ENCODE measurements at regions of chr20 and their contacts with region 1.

Region 1: DNA sequence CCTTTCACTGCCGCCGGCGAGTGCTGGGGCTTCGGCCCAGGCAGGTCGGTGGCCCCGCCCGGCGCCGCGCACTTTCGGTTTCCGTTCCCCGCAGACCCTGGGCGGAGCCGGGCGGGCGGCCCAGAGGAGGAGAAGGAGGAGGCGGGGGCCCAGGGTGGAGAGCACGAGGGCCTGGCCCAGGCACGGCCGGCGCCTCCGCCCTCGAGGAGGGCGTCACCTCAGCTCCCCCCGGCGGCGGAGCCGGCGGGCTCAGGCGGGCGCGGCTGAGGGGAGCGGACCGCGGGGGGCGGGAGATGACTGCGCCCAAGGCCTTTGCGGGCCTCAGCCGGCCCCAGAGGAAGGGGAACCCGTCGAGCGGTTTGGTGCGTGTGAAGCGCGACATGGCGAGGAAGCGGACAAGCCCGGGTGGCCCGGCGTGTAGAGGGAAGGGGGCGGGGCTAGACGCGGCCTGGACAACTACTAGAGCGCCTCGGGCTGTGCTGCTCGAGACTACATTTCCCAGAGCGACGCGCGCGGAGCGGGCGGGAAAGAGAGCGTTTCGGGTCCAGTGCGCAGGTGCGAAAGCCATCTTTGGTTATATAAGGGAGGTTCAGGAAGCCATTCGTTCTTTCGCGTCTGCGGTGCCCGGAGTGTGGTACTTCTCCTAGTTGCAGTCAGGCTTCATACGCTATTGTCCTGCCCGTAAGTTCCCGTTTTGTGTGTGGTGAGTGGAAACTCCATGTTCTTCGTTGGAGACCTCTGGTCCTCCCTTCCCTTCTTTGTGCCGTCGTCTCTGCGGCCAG is at the start of gene ZNFX1:
- DNase-seq: peak; percentile 94 to 99 (median 97)
- ATAC-seq: peak; percentile 92
- H3K4me3 ChIP-seq: peak within 1 kb of the TSS; percentile 80
- H3K4me3 Mint-ChIP-seq: peak within 1 kb of the TSS; percentile 91 to 100 (median 97)
- H3K27ac ChIP-seq: peak within 1 kb of the TSS; percentile 95
- H3K27ac Mint-ChIP-seq: peak within 1 kb of the TSS; percentile 90 to 99 (median 97)
- H3K4me1 ChIP-seq: peaks cover 37 to 61% of the 10 kb centered on the region in 2 donors
- H3K4me1 Mint-ChIP-seq: peaks cover 52 to 80% (median 67%) of the 10 kb centered on the region in 7 donors
- H3K27me3 ChIP-seq: no peaks in the 10 kb centered on the region
- H3K27me3 Mint-ChIP-seq: peaks cover 0 to 4% (median 0%) of the 10 kb centered on the region in 5 donors
- total RNA-seq, gene ZNFX1: 45.0 to 83.7 (median 62.2) TPM

Region 2: GRCh38 chr20:47356526-47357295 is 1921.5 kb before region 1 on chr20 and contains the start of gene ZMYND8:
- CTCF ChIA-PET with region 1: no interaction called
- POLR2A ChIA-PET with region 1: no interaction called
- intact Hi-C with region 1: loop called in 1 of 2 experiments (anchors 2 kb)
- DNase-seq: peak; percentile 88 to 100 (median 98)
- ATAC-seq: peak; percentile 91
- H3K4me3 ChIP-seq: peak within 1 kb of the TSS; percentile 75
- H3K4me3 Mint-ChIP-seq: peak within 1 kb of the TSS in 4 of 10 donors; percentile 88 to 95 (median 92)
- H3K27ac ChIP-seq: peak within 1 kb of the TSS; percentile 86
- H3K27ac Mint-ChIP-seq: peak within 1 kb of the TSS in 7 of 9 donors; percentile 97 to 100 (median 99)
- H3K4me1 ChIP-seq: peaks cover 47 to 65% of the 10 kb centered on the region in 2 donors
- H3K4me1 Mint-ChIP-seq: peaks cover 51 to 74% (median 53%) of the 10 kb centered on the region in 7 donors
- H3K27me3 ChIP-seq: no peaks in the 10 kb centered on the region
- H3K27me3 Mint-ChIP-seq: no peaks in the 10 kb centered on the region
- total RNA-seq, gene ZMYND8: 54.5 to 83.0 (median 68.5) TPM

Region 3: GRCh38 chr20:48921151-48921898 is 356.9 kb before region 1 on chr20 and contains the start of gene ARFGEF2:
- CTCF ChIA-PET with region 1: no interaction called
- POLR2A ChIA-PET with region 1: no interaction called
- intact Hi-C with region 1: loop called in 1 of 2 experiments (anchors 1 kb)
- DNase-seq: peak; percentile 79 to 99 (median 84)
- ATAC-seq: peak; percentile 96
- H3K4me3 ChIP-seq: peak within 1 kb of the TSS; percentile 99
- H3K4me3 Mint-ChIP-seq: peak within 1 kb of the TSS; percentile 94 to 100 (median 97)
- H3K27ac ChIP-seq: peak within 1 kb of the TSS; percentile 87
- H3K27ac Mint-ChIP-seq: peak within 1 kb of the TSS; percentile 95 to 99 (median 96)
- H3K4me1 ChIP-seq: peaks cover 20 to 21% of the 10 kb centered on the region in 2 donors
- H3K4me1 Mint-ChIP-seq: peaks cover 42 to 57% (median 55%) of the 10 kb centered on the region in 7 donors
- H3K27me3 ChIP-seq: no peaks in the 10 kb centered on the region
- H3K27me3 Mint-ChIP-seq: peaks cover 0 to 12% (median 0%) of the 10 kb centered on the region in 5 donors
- total RNA-seq, gene ARFGEF2: 24.2 to 33.5 (median 30.1) TPM

Region 4: GRCh38 chr20:49219089-49219923 is 58.9 kb before region 1 on chr20 and contains the start of gene DDX27:
- CTCF ChIA-PET with region 1: no interaction called
- POLR2A ChIA-PET with region 1: interaction called, 5 read pairs
- intact Hi-C with region 1: loop called (anchors 1 kb)
- DNase-seq: peak; percentile 90 to 98 (median 98)
- ATAC-seq: peak; percentile 92
- H3K4me3 ChIP-seq: peak within 1 kb of the TSS; percentile 91
- H3K4me3 Mint-ChIP-seq: peak within 1 kb of the TSS; percentile 88 to 100 (median 96)
- H3K27ac ChIP-seq: peak within 1 kb of the TSS; percentile 99
- H3K27ac Mint-ChIP-seq: peak within 1 kb of the TSS; percentile 89 to 100 (median 96)
- H3K4me1 ChIP-seq: peaks cover 9 to 11% of the 10 kb centered on the region in 2 donors
- H3K4me1 Mint-ChIP-seq: peaks cover 14 to 42% (median 26%) of the 10 kb centered on the region in 7 donors
- H3K27me3 ChIP-seq: no peaks in the 10 kb centered on the region
- H3K27me3 Mint-ChIP-seq: peaks cover 0 to 2% (median 0%) of the 10 kb centered on the region in 5 donors
- total RNA-seq, gene DDX27: 43.4 to 94.1 (median 65.7) TPM

Region 5: GRCh38 chr20:49310705-49311104 is 32.5 kb after region 1 on chr20:
- CTCF ChIA-PET with region 1: no interaction called
- POLR2A ChIA-PET with region 1: no interaction called
- intact Hi-C with region 1: no loop called
- DNase-seq: no peak
- ATAC-seq: no peak
- H3K4me3 ChIP-seq: no peak overlapping the region
- H3K4me3 Mint-ChIP-seq: no peak overlapping the region
- H3K27ac ChIP-seq: no peak overlapping the region
- H3K27ac Mint-ChIP-seq: peak overlapping the region in 1 of 9 donors; percentile 65
- H3K4me1 ChIP-seq: no peaks in the 10 kb centered on the region
- H3K4me1 Mint-ChIP-seq: no peaks in the 10 kb centered on the region
- H3K27me3 ChIP-seq: no peaks in the 10 kb centered on the region
- H3K27me3 Mint-ChIP-seq: peaks cover 8 to 31% (median 10%) of the 10 kb centered on the region in 5 donors

Region 6: DNA sequence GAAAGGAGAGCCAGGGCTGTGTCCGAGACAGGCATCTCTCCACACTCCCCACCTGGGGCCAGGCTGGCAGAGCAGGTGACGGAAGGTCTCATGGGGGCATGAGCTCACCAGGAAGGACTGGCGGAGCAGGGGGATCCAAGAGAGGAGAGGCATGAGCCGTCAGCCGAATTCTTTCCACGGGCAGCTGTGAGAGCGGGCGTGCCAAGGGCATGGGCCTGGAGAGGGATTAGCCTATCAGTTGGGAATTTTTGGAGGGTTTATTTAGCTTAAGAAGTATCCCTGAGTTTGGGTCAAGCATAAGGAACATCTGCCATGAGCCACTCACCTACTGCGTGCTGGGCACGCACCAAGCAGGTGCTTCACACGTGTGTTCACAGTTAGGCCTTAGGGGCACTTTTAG is 59.8 kb after region 1 on chr20:
- CTCF ChIA-PET with region 1: no interaction called
- POLR2A ChIA-PET with region 1: no interaction called
- intact Hi-C with region 1: no loop called
- DNase-seq: no peak
- ATAC-seq: no peak
- H3K4me3 ChIP-seq: no peak overlapping the region
- H3K4me3 Mint-ChIP-seq: no peak overlapping the region
- H3K27ac ChIP-seq: no peak overlapping the region
- H3K27ac Mint-ChIP-seq: no peak overlapping the region
- H3K4me1 ChIP-seq: no peaks in the 10 kb centered on the region
- H3K4me1 Mint-ChIP-seq: peaks cover 0 to 4% (median 0%) of the 10 kb centered on the region in 7 donors
- H3K27me3 ChIP-seq: peaks cover 0 to 5% of the 10 kb centered on the region in 2 donors
- H3K27me3 Mint-ChIP-seq: peaks cover 3 to 12% (median 9%) of the 10 kb centered on the region in 5 donors

Region 7: DNA sequence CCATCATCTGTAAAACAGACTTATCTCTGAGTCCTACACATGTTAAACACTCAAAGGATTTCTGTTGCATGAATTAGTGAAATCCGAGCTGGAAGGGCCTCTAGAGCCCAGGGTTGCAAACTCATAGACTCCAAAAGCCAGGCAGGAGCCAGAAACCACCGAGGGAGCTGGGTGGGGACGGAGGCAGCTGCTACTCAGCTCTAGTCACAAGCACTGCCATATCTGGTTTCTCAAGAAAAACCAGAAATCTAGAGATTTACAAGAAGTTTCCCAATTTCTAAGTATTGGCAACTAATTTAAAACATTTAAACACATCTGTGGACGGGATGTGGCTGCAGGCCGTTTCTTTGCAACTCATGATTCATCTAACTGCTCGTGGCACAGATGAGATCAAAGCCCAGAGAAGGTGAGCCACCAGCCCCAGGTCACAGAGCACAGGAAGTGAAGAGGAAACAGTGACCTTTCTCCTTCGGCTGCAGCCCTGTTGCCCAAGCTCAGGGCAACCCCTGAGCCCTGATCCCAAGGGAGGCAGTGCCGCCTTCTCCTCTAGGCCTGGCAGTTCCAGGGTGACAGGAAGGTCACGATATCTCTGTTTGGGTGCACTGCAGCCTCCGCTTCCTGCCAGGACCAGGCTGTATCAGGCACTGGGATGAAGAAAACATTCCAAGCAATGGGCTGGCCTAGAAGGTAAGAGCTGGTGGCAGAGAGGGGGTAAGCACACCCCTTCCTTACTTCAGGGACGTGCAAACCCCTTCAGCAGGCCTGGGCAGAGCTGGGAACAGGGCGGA is 316.1 kb after region 1 on chr20:
- CTCF ChIA-PET with region 1: no interaction called
- POLR2A ChIA-PET with region 1: no interaction called
- intact Hi-C with region 1: loop called in 1 of 2 experiments (anchors 2 kb)
- DNase-seq: peak in 1 of 9 donors; percentile 76
- ATAC-seq: no peak
- H3K4me3 ChIP-seq: no peak overlapping the region
- H3K4me3 Mint-ChIP-seq: peak overlapping the region in 1 of 10 donors; percentile 85
- H3K27ac ChIP-seq: no peak overlapping the region
- H3K27ac Mint-ChIP-seq: peak overlapping the region in 1 of 9 donors; percentile 97
- H3K4me1 ChIP-seq: peaks cover 0 to 38% of the 10 kb centered on the region in 2 donors
- H3K4me1 Mint-ChIP-seq: peaks cover 0 to 86% (median 4%) of the 10 kb centered on the region in 7 donors
- H3K27me3 ChIP-seq: no peaks in the 10 kb centered on the region
- H3K27me3 Mint-ChIP-seq: peaks cover 0 to 13% (median 4%) of the 10 kb centered on the region in 5 donors

Region 8: GRCh38 chr20:49936153-49937027 is 658.2 kb after region 1 on chr20 and contains the start of gene RNF114:
- CTCF ChIA-PET with region 1: no interaction called
- POLR2A ChIA-PET with region 1: no interaction called
- intact Hi-C with region 1: loop called in 1 of 2 experiments (anchors 1 kb)
- DNase-seq: peak; percentile 79 to 92 (median 86)
- ATAC-seq: peak; percentile 99
- H3K4me3 ChIP-seq: peak within 1 kb of the TSS; percentile 90
- H3K4me3 Mint-ChIP-seq: peak within 1 kb of the TSS; percentile 95 to 100 (median 98)
- H3K27ac ChIP-seq: peak within 1 kb of the TSS; percentile 95
- H3K27ac Mint-ChIP-seq: peak within 1 kb of the TSS; percentile 83 to 98 (median 95)
- H3K4me1 ChIP-seq: peaks cover 20 to 27% of the 10 kb centered on the region in 2 donors
- H3K4me1 Mint-ChIP-seq: peaks cover 36 to 61% (median 53%) of the 10 kb centered on the region in 7 donors
- H3K27me3 ChIP-seq: no peaks in the 10 kb centered on the region
- H3K27me3 Mint-ChIP-seq: no peaks in the 10 kb centered on the region
- total RNA-seq, gene RNF114: 67.1 to 113 (median 101) TPM

Measured in naive thymus-derived CD4-positive, alpha-beta T cell (primary cell).